Activated T-helper 2 cell treated with anti-CD3 and anti-CD28 coated beads, Interferon-gamma antibody, Interleukin-2, Interleukin-4, amounts not matched to agents 10 μg/mL and 5 μg/mL and 100 μg/mL, durations not matched to agents 14 hours and 24 hours and 36 hours (primary cell): ENCODE measurements at regions of chr2 and their contacts with region 1.

Region 1: DNA sequence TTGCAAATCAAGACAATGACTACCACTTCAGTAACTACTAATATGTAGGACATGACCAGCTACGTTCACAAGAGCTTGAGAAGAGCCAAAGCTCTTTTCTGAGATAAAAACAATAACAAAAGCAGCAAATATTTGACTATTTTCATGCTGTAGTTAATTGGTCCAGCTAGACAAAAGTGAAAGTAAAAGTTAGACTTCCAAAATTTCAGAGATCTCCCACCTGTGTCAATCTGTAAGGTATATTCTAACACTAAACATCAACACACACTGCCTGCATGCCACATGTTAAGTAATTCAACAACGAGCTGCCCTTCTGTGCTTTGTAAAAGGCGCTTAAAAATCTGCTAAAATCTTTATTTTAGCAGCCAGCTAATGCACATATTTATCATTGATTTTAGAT is 185.9 kb downstream of the SLC39A10 start:
- DNase-seq: no peak
- H3K4me3 Mint-ChIP-seq: no peak overlapping the region
- H3K27ac Mint-ChIP-seq: no peak overlapping the region
- H3K4me1 Mint-ChIP-seq: peaks cover 6% of the 10 kb centered on the region
- H3K27me3 Mint-ChIP-seq: peaks cover 7% of the 10 kb centered on the region

Region 2: DNA sequence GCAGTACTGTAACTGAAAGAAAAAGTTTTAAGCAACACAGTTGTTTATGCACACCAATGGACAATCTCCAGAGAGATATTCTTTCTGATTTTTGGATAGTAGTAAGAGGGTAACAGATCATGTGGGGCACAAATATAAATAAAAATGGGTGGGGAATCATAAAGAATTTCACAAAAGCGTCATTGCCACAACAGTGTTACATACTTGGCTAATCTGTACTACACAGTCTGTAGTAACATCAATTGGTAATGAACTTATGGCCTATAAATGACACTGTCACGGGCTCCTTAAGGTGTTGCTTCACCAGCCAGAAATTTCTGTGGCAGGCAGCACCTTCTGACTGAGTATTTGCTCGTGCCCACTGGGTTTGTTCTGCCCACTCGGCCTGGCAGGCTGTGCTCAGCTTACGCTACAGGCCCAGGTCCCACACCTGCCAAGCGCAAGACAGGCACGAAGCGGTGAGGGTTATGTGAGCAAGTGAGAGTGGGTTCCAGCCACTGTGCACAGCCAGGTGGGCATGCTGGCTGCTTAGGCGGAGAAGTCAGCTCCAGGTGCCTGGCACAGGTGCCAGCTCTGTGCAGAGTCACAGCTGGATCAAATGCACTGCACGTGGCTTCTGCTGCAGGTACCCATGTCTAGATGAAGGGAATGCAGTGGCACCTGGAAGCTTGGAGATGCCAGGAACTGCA is 718.4 kb before region 1 on chr2:
- intact Hi-C with region 1: no loop called
- DNase-seq: no peak
- H3K4me3 Mint-ChIP-seq: no peak overlapping the region
- H3K27ac Mint-ChIP-seq: no peak overlapping the region
- H3K4me1 Mint-ChIP-seq: no peaks in the 10 kb centered on the region
- H3K27me3 Mint-ChIP-seq: no peaks in the 10 kb centered on the region

Region 3: GRCh38 chr2:195575879-195576401 is 267.0 kb before region 1 on chr2:
- intact Hi-C with region 1: loop called (anchors 5 kb)
- DNase-seq: no peak
- H3K4me3 Mint-ChIP-seq: no peak overlapping the region
- H3K27ac Mint-ChIP-seq: no peak overlapping the region
- H3K4me1 Mint-ChIP-seq: peaks cover 49% of the 10 kb centered on the region
- H3K27me3 Mint-ChIP-seq: no peaks in the 10 kb centered on the region